Ovary (tissue), 10 donors: ENCODE measurements at regions of chr12 and their contacts with region 1.

Region 1: DNA sequence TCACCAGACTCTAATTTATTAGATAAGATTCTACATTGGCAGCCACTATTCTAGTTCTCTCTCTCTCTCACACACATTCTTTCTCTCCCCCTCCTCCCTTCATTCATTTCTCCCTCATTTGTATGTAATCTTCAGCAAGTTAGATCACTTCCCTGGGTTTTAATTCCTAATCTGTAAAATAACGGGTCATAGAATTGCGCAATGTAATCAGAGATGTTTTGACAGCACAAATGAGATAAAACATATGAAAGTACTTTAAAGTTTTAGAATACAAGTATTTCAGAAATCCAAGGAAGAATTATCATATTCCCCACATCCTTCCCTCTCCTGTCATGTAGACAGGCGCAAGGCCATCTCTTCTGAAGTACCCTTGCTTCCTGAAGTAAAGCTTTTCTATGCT is 21.7 kb downstream of the STYK1 start:
- DNase-seq: no peak
- H3K4me3 ChIP-seq: no peak overlapping the region
- H3K27ac ChIP-seq: no peak overlapping the region
- H3K4me1 ChIP-seq: no peaks in the 10 kb centered on the region
- H3K27me3 ChIP-seq: no peaks in the 10 kb centered on the region
- CTCF ChIP-seq: no peak
- EP300 ChIP-seq: no peak
- POLR2A ChIP-seq: no peak

Region 2: GRCh38 chr12:10249690-10250455 is 402.3 kb before region 1 on chr12:
- intact Hi-C with region 1: loop called in 1 of 4 experiments (anchors 5 kb)
- DNase-seq: no peak
- H3K4me3 ChIP-seq: no peak overlapping the region
- H3K27ac ChIP-seq: no peak overlapping the region
- H3K4me1 ChIP-seq: no peaks in the 10 kb centered on the region
- H3K27me3 ChIP-seq: no peaks in the 10 kb centered on the region
- CTCF ChIP-seq: no peak
- EP300 ChIP-seq: no peak
- POLR2A ChIP-seq: no peak

Region 3: GRCh38 chr12:10726940-10727339 is 74.7 kb after region 1 on chr12:
- intact Hi-C with region 1: no loop called
- DNase-seq: no peak
- H3K4me3 ChIP-seq: no peak overlapping the region
- H3K27ac ChIP-seq: no peak overlapping the region
- H3K4me1 ChIP-seq: no peaks in the 10 kb centered on the region
- H3K27me3 ChIP-seq: no peaks in the 10 kb centered on the region
- CTCF ChIP-seq: no peak
- EP300 ChIP-seq: no peak
- POLR2A ChIP-seq: no peak